ENCODE measurements at regions of chr7 and their contacts with region 1.

Region 1: GRCh38 chr7:140924019-140924820 is 509 bp downstream of the BRAF start:
- DNase-seq: peak; percentile 54 to 96 (median 70)

Region 2: DNA sequence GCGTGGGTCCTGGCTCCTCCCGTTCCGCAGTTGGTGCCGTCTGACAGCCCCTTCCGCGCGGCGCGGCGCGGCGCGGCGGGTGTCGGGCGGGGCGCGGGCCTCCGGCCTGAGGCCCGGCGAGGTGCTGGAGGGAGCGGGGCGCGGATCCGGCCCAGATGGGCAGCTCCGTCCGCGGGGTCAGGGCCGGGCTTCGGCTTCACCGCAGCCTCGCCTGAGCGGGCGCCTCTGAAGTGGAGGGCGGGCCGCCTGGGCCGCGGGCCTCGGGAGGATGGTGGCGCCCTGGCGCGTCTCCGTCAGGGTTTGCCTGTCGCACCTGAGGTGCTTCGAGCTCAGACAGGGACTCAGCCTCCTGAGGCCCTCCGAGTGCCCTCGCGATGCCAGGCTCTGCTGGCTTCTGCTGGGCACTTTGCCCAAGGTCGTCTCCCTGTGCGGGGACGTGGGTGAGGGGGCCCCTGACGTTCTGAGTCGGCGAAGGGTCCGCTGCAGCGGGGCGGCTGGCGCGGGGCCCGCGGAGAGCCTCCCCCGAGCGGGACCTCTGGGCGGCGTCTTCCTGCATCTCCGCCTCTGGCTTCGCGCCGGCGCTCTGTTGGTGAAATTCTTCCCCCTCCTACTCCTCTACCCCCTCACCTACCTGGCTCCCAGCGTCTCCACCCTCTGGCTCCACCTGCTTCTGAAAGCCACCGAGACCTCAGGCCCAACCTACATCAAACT is 251.0 kb before region 1 on chr7:
- intact Hi-C with region 1: loop called (anchors 10 kb)
- DNase-seq: peak in 6 of 10 donors; percentile 29 to 91 (median 44)

Region 3: DNA sequence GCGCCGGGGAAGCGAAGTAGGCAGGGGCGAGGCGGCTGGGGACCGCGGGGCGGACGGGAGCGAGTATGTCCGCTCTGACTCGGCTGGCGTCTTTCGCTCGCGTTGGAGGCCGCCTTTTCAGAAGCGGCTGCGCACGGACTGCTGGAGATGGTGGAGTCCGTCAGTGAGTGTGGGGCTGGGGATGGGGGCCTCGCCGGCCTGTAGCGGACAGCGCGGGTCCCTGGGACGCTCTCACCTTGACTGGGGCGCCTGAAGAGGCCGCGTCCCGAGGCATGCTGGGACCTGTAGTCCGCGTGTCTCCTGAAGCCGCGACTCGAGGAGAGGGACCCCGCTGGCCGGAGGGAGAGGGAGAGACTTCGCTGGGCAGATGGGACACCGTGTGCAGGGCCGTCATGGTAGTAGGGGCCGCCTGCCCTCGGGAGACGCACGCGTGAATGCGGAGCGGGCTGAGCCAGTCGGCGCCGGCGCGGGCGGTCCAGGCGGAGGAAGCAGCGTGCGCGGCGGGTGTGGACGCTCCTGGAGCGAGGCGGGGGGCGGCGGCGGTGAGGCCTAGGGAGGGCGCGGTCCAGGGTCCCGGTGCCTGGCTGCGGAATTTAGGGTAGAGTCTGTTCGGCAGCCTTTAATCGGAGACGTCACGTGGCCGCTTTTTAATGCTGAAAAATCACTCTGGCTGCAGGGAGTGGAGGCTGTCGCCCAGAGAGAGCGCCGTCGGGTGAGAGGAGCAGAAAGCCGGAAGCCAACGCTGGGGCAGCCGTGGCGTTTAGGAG is 227.4 kb before region 1 on chr7 and contains the start of gene NDUFB2:
- intact Hi-C with region 1: loop called (anchors 1 kb)
- DNase-seq: peak in 9 of 10 donors; percentile 76 to 98 (median 83)

Region 4: GRCh38 chr7:140767418-140767817 is 156.8 kb before region 1 on chr7:
- intact Hi-C with region 1: no loop called
- DNase-seq: no peak

Region 5: GRCh38 chr7:140866926-140867325 is 57.3 kb before region 1 on chr7:
- intact Hi-C with region 1: no loop called
- DNase-seq: no peak